Activated B cell treated with CpG ODN at 0.5 μM for 24 hours (primary cell): ENCODE measurements at regions of chr12 and their contacts with region 1.

Region 1: DNA sequence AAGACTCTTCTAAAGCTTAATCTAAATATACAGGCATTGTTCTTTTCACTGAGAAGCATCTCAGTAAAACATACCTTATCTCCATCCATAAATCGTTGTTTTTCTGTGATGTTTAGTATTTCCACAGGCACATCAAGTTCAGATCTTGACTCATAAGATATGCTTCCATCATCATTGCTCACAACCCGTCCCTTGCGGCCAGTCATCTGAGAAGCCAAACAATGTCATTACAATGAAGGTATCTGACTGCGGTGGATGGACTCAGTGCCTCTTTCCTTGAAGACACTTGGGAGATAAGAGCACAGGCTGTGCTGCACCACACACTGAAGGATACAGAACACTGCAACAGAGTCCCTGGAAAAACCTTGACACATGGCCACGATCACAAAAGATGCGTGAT is 44.8 kb downstream of the SBNO1 start:
- DNase-seq: no peak
- ATAC-seq: no peak
- H3K4me3 Mint-ChIP-seq: no peak overlapping the region
- H3K27ac Mint-ChIP-seq: no peak overlapping the region
- H3K4me1 Mint-ChIP-seq: no peaks in the 10 kb centered on the region
- H3K27me3 Mint-ChIP-seq: no peaks in the 10 kb centered on the region
- CTCF ChIP-seq: no peak

Region 2: DNA sequence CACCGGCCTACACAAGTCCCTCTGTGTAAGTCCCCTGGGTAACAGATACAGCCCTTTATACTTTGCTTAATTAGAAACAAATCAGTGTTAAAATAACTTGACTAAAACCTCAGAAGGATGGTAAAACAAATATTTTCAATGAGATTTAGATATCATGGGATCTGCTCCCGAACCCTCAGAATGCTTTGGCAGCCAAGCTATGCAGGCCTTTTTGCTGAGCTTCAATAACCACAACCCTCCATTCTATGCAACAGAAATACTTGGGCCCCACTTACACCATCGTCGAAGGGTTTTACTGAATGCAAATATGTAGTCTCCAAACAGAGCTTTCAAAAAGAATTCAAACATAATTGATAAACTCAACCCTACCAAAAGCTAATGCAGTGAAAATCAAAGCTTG is 139.7 kb before region 1 on chr12:
- CTCF ChIA-PET with region 1: no interaction called
- POLR2A ChIA-PET with region 1: no interaction called
- intact Hi-C with region 1: no loop called
- DNase-seq: no peak
- ATAC-seq: no peak
- H3K4me3 Mint-ChIP-seq: no peak overlapping the region
- H3K27ac Mint-ChIP-seq: no peak overlapping the region
- H3K4me1 Mint-ChIP-seq: no peaks in the 10 kb centered on the region
- H3K27me3 Mint-ChIP-seq: no peaks in the 10 kb centered on the region
- CTCF ChIP-seq: no peak

Region 3: DNA sequence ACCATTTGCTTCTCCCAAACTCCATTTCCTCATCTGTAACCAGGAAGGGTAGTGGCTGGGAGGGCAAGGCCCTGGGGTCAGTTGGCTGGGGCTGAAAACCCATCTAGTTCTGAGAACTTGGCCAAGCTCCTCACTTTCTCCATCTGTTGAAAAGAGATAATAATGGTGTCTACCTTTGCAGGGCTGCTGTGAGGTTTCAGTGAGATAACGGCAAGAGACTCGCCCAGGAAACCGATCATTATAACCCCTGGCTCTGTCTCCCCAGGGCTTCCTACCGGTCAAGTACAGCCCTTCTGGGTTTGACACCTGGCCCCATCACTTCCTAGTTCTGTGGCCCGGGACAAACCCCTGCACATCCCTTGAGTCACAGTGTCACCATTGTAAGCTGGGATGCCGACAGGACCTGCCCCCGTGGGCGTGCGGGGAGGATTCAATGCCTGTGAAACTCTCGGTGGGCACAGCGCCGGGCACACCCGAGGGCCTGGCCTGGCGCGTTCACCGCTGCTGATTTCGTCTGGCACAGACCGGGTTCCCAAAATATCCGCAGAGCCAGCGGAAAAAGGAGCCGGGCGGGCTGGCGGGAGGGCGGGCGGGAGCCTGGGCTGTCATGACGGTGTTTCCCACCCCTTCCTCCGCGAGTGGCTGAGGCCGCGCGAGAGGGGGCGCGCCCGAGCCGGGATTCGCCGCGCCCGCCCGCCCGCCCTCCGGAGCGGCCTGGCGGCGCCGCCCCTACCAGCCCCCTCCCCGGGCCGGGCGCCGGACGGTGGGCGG is 68.5 kb after region 1 on chr12:
- CTCF ChIA-PET with region 1: no interaction called
- POLR2A ChIA-PET with region 1: no interaction called
- intact Hi-C with region 1: no loop called
- DNase-seq: peak; percentile 79
- ATAC-seq: peak; percentile 59
- H3K4me3 Mint-ChIP-seq: peak overlapping the region; percentile 88
- H3K27ac Mint-ChIP-seq: peak overlapping the region; percentile 87
- H3K4me1 Mint-ChIP-seq: peaks cover 36% of the 10 kb centered on the region
- H3K27me3 Mint-ChIP-seq: no peaks in the 10 kb centered on the region
- CTCF ChIP-seq: no peak

Region 4: GRCh38 chr12:123410041-123410412 is 90.2 kb after region 1 on chr12:
- CTCF ChIA-PET with region 1: no interaction called
- POLR2A ChIA-PET with region 1: no interaction called
- intact Hi-C with region 1: no loop called
- DNase-seq: no peak
- ATAC-seq: no peak
- H3K4me3 Mint-ChIP-seq: no peak overlapping the region
- H3K27ac Mint-ChIP-seq: no peak overlapping the region
- H3K4me1 Mint-ChIP-seq: peaks cover 13% of the 10 kb centered on the region
- H3K27me3 Mint-ChIP-seq: no peaks in the 10 kb centered on the region
- CTCF ChIP-seq: no peak

Region 5: DNA sequence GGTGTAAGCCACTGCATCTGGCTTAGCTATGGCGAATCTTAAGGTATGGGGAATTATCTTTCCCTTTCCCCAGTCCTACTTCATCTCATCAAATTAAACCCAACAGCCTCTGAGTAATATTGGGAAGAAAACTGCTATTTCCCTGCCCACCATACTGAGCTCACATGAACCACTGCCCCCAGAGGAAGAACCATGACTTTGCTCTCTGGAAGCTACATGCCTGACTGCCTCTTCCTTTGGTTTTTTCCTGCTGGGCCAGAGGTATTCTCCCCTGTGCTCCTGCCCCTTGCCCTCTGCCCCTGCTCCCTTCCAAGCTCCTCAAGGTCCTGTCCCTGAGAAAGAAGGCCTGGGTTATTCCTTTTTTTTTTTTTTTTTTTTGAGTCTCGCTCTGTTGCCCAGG is 101.5 kb after region 1 on chr12:
- CTCF ChIA-PET with region 1: no interaction called
- POLR2A ChIA-PET with region 1: interaction called, 15 read pairs
- intact Hi-C with region 1: no loop called
- DNase-seq: no peak
- ATAC-seq: no peak
- H3K4me3 Mint-ChIP-seq: no peak overlapping the region
- H3K27ac Mint-ChIP-seq: no peak overlapping the region
- H3K4me1 Mint-ChIP-seq: peaks cover 3% of the 10 kb centered on the region
- H3K27me3 Mint-ChIP-seq: no peaks in the 10 kb centered on the region
- CTCF ChIP-seq: no peak

Region 6: GRCh38 chr12:123533672-123534643 is 214.1 kb after region 1 on chr12 and contains the start of gene RILPL1:
- CTCF ChIA-PET with region 1: no interaction called
- POLR2A ChIA-PET with region 1: no interaction called
- intact Hi-C with region 1: no loop called
- DNase-seq: peak; percentile 66
- ATAC-seq: peak; percentile 72
- H3K4me3 Mint-ChIP-seq: peak within 1 kb of the TSS; percentile 85
- H3K27ac Mint-ChIP-seq: no peak within 1 kb of the TSS
- H3K4me1 Mint-ChIP-seq: peaks cover 20% of the 10 kb centered on the region
- H3K27me3 Mint-ChIP-seq: no peaks in the 10 kb centered on the region
- CTCF ChIP-seq: no peak
- total RNA-seq, gene RILPL1: 0.67 and 0.69 TPM in 2 replicates